Dendritic cell treated with granulocyte-macrophage colony-stimulating factor and Interleukin-4, amounts not matched to agents 40 ng/mL and 50 ng/mL, for 4 days (primary cell): ENCODE measurements at regions of chr3 and their contacts with region 1.

Region 1: GRCh38 chr3:179562591-179563270 is at the start of gene ACTL6A:
- H3K4me3 Mint-ChIP-seq: peak within 1 kb of the TSS; percentile 94
- H3K27ac Mint-ChIP-seq: peak within 1 kb of the TSS; percentile 88
- H3K4me1 Mint-ChIP-seq: peaks cover 21% of the 10 kb centered on the region
- H3K27me3 Mint-ChIP-seq: no peaks in the 10 kb centered on the region

Region 2: DNA sequence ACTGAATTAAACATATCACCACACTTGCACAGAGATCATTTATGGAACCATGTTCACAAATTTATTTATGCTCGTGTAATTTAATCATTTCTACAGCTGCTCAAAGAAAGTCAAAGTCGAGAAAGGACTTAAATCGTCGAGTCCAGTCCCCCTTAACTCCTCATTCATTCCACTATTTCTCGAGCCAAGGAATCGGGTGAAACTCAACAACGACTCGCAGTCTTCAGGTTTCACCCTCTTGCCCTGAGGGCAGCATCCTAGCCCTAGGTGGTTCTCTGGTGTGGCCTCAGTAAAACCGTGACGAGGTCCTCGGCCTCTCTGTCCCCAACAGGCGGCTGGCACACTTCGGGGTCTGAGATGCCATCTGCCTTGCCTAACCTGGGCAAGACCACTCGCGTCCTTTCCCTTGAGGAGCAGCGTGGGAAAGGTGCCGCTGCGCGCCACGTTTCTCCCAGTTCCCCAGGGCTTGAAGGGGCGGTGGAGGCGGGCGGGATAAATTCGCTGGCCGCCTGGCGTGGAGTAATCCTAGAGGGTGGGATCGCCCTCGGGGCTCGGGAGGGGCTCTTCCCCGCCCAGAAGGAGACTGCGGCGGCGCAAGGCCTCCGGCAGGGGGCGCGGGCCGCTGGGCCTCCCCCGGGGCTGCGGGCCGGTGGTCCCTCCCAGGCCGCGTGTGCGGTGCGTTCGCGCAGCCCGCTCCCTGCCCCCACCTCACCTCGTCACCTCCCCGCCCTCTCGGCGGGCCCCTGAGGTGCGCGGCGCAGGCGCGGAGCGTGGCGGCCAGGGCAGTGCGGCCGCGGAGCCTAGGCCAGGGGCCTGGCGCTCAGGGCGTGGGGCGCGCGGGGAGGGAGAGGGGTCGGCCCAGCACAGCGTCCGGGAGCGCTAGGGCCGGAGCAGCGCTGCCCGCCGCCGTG is 240.2 kb before region 1 on chr3 and contains the start of gene ZNF639:
- intact Hi-C with region 1: loop called (anchors 2 kb)
- H3K4me3 Mint-ChIP-seq: peak within 1 kb of the TSS; percentile 83
- H3K27ac Mint-ChIP-seq: peak within 1 kb of the TSS; percentile 89
- H3K4me1 Mint-ChIP-seq: peaks cover 31% of the 10 kb centered on the region
- H3K27me3 Mint-ChIP-seq: no peaks in the 10 kb centered on the region

Region 3: DNA sequence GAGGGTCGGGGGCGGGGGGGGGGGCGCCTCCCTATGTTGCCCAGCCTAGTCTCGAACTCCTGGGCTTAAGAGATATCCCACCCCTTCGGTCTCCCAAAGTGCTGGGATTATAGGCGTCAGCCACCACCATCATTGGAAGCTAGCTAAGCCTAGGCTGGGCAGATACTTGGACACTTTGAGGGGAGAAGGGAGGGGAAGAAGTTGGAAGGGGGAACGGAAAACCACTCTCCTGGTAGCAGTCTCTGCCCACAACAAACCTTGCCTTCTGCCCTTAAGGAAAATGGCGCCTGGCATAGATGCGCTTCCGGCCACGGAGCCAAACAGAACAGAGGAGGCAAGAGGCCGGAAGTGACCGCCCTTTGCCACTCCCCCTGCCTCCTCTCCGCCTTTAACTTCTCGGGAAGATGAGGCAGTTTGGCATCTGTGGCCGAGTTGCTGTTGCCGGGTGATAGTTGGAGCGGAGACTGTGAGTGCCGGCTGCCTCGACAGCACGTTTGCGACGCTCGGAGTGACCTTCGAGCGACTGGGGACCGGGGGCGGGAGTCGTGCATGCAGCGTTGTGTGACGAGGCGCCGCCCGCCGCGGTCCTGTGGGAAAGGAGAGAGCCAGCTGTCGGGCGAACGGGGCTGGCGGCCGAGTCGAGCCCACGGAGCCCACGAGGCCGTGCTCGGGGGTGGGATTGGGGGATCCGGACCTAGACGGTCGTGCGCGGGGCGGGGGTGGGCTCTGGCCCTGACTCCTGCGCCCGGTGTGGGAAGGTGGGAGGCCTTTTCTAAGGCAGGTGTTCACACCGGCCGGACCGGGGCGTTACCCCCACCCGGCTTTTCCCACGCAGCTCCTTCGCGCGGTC is 215.2 kb before region 1 on chr3 and contains the start of gene MFN1:
- intact Hi-C with region 1: loop called (anchors 1 kb)
- H3K4me3 Mint-ChIP-seq: peak within 1 kb of the TSS; percentile 98
- H3K27ac Mint-ChIP-seq: peak within 1 kb of the TSS; percentile 94
- H3K4me1 Mint-ChIP-seq: peaks cover 16% of the 10 kb centered on the region
- H3K27me3 Mint-ChIP-seq: peaks cover 2% of the 10 kb centered on the region

Region 4: GRCh38 chr3:179421500-179421899 is 141.2 kb before region 1 on chr3:
- intact Hi-C with region 1: loop called (anchors 2 kb)
- H3K4me3 Mint-ChIP-seq: no peak overlapping the region
- H3K27ac Mint-ChIP-seq: no peak overlapping the region
- H3K4me1 Mint-ChIP-seq: no peaks in the 10 kb centered on the region
- H3K27me3 Mint-ChIP-seq: no peaks in the 10 kb centered on the region

Region 5: DNA sequence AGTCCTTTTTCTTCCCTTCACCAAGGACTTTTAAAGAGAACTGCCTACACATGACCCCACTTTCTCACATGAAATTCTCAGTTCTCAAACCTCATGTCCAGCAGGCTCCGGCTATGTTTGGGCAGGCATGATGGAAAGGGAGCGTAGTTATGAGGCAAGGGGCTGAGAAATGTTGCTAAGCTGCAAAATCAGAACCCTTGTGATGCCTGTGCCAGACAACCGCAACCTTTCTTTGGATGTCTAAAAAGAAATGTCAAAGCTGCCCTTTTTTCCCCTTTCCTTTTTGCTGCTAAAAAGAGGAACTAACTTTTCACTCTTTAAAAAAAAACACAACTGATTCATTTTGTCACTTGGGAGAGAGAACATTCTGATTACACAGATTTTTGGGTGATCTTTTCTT is 130.7 kb before region 1 on chr3:
- intact Hi-C with region 1: loop called (anchors 5 kb)
- H3K4me3 Mint-ChIP-seq: peak overlapping the region; percentile 52
- H3K27ac Mint-ChIP-seq: peak overlapping the region; percentile 84
- H3K4me1 Mint-ChIP-seq: peaks cover 72% of the 10 kb centered on the region
- H3K27me3 Mint-ChIP-seq: no peaks in the 10 kb centered on the region

Region 6: GRCh38 chr3:179446501-179446900 is 116.2 kb before region 1 on chr3:
- intact Hi-C with region 1: loop called (anchors 1 kb)
- H3K4me3 Mint-ChIP-seq: no peak overlapping the region
- H3K27ac Mint-ChIP-seq: peak overlapping the region; percentile 10
- H3K4me1 Mint-ChIP-seq: peaks cover 48% of the 10 kb centered on the region
- H3K27me3 Mint-ChIP-seq: no peaks in the 10 kb centered on the region

Region 7: DNA sequence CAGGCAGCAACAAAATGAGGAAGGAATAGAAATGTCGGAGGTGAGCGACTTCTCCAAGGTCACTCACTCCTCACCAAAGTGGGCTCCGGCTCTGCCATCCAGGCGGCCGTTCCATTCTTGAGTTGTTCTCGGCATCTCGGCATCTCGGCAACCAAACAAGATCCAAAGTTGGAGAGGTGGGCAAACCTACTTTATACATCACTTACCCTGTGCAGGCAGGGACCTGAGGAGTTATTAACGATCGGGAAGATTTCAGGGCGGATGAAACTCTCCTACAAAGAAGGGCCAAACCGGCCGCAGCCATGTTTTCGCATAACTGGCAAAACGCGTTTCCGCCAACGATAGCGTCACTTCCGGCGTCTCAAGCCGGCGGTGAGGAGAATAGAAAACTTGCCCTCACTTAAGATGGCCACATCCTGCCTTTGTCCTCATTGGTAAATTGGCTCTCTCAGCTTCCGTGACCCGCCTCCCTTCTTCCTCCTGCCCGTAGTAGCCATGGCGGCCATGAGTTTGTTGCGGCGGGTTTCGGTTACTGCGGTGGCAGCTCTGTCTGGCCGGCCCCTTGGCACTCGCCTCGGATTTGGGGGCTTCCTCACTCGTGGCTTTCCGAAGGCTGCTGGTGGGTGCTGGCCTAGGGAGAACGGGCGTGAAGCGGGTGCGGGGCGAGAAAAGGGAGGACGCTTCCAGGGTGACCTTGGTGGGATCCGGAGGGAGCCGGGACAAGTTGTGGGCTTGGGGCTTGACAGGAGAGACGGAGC is 41.8 kb after region 1 on chr3 and contains the starts of genes MRPL47 and NDUFB5:
- intact Hi-C with region 1: loop called (anchors 1 kb)
- H3K4me3 Mint-ChIP-seq: peak within 1 kb of the TSS; percentile 100
- H3K27ac Mint-ChIP-seq: peak within 1 kb of the TSS; percentile 100
- H3K4me1 Mint-ChIP-seq: peaks cover 31% of the 10 kb centered on the region
- H3K27me3 Mint-ChIP-seq: no peaks in the 10 kb centered on the region